Posterior vena cava (tissue), 2 donors: ENCODE measurements at regions of chr16 and their contacts with region 1.

Region 1: GRCh38 chr16:80427795-80428194 is 113.0 kb upstream of the DYNLRB2 start:
- DNase-seq: no peak

Region 2: DNA sequence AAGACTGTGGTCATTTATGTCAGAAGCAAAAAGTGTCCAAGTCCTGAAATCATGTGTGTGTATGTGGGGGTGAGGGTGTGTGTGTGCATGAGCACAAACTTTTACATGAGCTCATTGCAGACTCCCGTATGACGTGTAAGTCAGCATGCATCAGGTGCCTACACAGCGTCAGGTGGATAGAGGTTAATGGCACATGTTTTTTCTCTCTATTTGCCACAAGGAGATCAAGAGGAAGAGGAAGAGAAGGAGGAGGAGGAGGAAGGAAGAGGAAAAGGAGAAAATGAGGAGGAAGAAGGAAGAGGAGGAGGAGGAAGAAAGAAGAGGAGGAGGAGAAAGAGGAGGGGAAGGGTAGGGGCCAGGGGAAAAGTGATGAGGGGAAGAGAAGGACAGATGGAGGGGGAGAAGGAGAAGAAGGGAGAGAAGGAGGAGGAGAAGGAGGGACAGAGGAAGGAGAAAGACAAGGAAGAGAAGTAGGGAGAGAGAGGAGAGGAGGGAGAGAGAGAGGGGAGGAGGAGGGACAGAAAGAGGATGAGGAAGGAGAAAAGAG is 64.9 kb before region 1 on chr16:
- intact Hi-C with region 1: loop called in 1 of 2 experiments (anchors 2 kb)
- DNase-seq: no peak

Region 3: DNA sequence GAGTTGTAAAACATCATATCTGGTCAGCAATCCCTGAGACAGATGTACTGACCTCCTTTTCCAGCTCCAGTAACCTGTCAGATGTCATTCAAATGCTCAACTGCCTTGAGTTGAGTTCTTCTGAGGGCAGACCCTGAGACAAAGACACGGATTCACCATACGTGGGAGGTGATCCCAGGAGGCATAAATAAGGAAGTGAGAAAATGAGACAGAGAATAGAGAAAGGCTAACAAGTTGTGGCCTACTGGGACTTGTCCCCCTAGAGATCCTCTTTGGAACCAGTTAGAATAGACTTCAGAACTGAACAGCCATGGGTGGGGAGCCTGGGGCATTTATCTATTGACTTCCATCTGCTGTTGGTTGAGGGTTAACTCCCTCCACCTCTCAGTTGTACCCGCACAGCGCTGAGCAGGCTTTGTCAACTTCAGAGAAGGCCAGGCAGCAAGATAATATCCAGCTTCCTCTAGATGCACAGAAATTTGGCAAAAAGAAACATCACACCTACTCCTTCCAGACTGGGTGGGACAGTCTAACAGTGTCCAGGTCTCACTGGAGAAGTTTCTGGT is 10.0 kb before region 1 on chr16:
- intact Hi-C with region 1: no loop called
- DNase-seq: no peak

Region 4: DNA sequence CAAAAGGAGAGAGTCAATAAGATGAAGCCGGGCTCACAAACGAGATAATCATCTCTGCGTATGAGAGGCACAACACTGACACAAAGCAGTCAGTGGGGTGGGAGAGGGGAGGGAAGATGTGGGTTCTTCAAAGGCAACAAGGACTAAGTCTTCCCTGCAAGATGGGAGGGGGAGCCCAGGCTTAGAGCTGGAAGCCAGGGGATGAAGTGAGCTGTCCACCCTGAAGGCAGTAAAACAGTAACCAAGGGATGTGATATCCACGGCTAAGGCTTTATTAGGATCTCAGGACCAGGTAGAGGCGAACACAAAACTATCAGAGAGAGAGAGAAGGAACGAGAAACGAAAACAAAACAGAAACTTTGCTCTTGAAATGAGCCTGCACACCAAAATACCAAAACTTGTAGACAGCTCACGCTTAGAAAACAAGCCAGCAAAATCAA is 228.9 kb after region 1 on chr16:
- intact Hi-C with region 1: no loop called
- DNase-seq: no peak

Region 5: DNA sequence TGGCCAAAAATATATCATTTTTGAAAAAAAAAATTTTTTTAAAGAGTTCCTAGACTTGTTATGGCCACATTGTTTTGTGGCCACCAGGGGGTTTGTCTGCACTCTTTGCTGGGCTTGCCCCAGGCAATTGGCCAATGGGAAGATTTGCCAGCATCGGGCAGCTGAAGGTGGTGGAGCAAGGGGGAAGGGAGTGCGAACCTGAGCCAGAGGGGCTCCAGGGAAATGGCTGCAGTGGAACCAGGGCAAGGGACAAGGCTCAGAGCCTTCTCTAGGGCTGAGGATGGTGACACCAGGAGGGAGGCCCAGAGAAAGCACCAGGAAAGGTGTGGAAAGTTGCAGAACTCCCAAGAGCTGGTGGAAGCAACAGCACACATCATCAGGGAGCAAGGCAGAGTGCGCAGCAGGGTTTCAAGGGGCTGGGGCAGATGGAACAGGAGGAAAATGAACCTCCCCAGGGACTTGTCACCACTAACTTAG is 1001.3 kb after region 1 on chr16:
- intact Hi-C with region 1: no loop called
- DNase-seq: no peak